ENCODE measurements at regions of chr19 and their contacts with region 1.

Region 1: GRCh38 chr19:40662921-40663694 is 27.3 kb downstream of the NUMBL start:
- DNase-seq: peak; percentile 85 to 98 (median 94)
- ATAC-seq: peak; percentile 89
- H3K4me3 ChIP-seq: peak overlapping the region; percentile 56
- H3K4me3 Mint-ChIP-seq: peak overlapping the region; percentile 91
- H3K27ac ChIP-seq: peak overlapping the region; percentile 35 to 53
- H3K27ac Mint-ChIP-seq: peak overlapping the region; percentile 74
- H3K4me1 ChIP-seq: peaks cover 15% of the 10 kb centered on the region
- H3K4me1 Mint-ChIP-seq: peaks cover 19% of the 10 kb centered on the region
- H3K27me3 ChIP-seq: no peaks in the 10 kb centered on the region
- H3K27me3 Mint-ChIP-seq: no peaks in the 10 kb centered on the region
- CTCF ChIP-seq: peak; percentile 90

Region 2: GRCh38 chr19:40716655-40717324 is 53.7 kb after region 1 on chr19 and contains the starts of genes COQ8B and ITPKC:
- CTCF ChIA-PET with region 1: interaction called, 3 read pairs
- POLR2A ChIA-PET with region 1: interaction called, 9 read pairs
- intact Hi-C with region 1: loop called in 1 of 2 experiments (anchors 10 kb)
- DNase-seq: peak; percentile 98 to 100 (median 99)
- ATAC-seq: peak; percentile 73
- H3K4me3 ChIP-seq: peak within 1 kb of the TSS; percentile 89
- H3K4me3 Mint-ChIP-seq: peak within 1 kb of the TSS; percentile 95
- H3K27ac ChIP-seq: peak within 1 kb of the TSS; percentile 89 to 96
- H3K27ac Mint-ChIP-seq: peak within 1 kb of the TSS; percentile 94
- H3K4me1 ChIP-seq: peaks cover 70% of the 10 kb centered on the region
- H3K4me1 Mint-ChIP-seq: peaks cover 70% of the 10 kb centered on the region
- H3K27me3 ChIP-seq: no peaks in the 10 kb centered on the region
- H3K27me3 Mint-ChIP-seq: no peaks in the 10 kb centered on the region
- CTCF ChIP-seq: no peak
- total RNA-seq, gene COQ8B: 16.4 to 18.3 TPM
- total RNA-seq, gene ITPKC: 3.7 to 4.5 TPM

Region 3: GRCh38 chr19:40798223-40798996 is 135.3 kb after region 1 on chr19:
- CTCF ChIA-PET with region 1: interaction called, 7 read pairs
- POLR2A ChIA-PET with region 1: interaction called, 12 read pairs
- intact Hi-C with region 1: loop called in 1 of 2 experiments (anchors 5 kb)
- DNase-seq: peak; percentile 100
- ATAC-seq: peak; percentile 78
- H3K4me3 ChIP-seq: peak overlapping the region; percentile 64
- H3K4me3 Mint-ChIP-seq: peak overlapping the region; percentile 92
- H3K27ac ChIP-seq: peak overlapping the region; percentile 88 to 96
- H3K27ac Mint-ChIP-seq: peak overlapping the region; percentile 98
- H3K4me1 ChIP-seq: peaks cover 47% of the 10 kb centered on the region
- H3K4me1 Mint-ChIP-seq: peaks cover 45% of the 10 kb centered on the region
- H3K27me3 ChIP-seq: no peaks in the 10 kb centered on the region
- H3K27me3 Mint-ChIP-seq: no peaks in the 10 kb centered on the region
- CTCF ChIP-seq: peak; percentile 40

Region 4: GRCh38 chr19:40822161-40822560 is 159.1 kb after region 1 on chr19:
- CTCF ChIA-PET with region 1: interaction called, 24 read pairs
- POLR2A ChIA-PET with region 1: interaction called, 13 read pairs
- intact Hi-C with region 1: loop called (anchors 1 to 2 kb)
- DNase-seq: peak in 1 of 14 experiments; percentile 17
- ATAC-seq: no peak
- H3K4me3 ChIP-seq: no peak overlapping the region
- H3K4me3 Mint-ChIP-seq: no peak overlapping the region
- H3K27ac ChIP-seq: no peak overlapping the region
- H3K27ac Mint-ChIP-seq: no peak overlapping the region
- H3K4me1 ChIP-seq: peaks cover 47% of the 10 kb centered on the region
- H3K4me1 Mint-ChIP-seq: peaks cover 38% of the 10 kb centered on the region
- H3K27me3 ChIP-seq: no peaks in the 10 kb centered on the region
- H3K27me3 Mint-ChIP-seq: no peaks in the 10 kb centered on the region
- CTCF ChIP-seq: no peak

Region 5: DNA sequence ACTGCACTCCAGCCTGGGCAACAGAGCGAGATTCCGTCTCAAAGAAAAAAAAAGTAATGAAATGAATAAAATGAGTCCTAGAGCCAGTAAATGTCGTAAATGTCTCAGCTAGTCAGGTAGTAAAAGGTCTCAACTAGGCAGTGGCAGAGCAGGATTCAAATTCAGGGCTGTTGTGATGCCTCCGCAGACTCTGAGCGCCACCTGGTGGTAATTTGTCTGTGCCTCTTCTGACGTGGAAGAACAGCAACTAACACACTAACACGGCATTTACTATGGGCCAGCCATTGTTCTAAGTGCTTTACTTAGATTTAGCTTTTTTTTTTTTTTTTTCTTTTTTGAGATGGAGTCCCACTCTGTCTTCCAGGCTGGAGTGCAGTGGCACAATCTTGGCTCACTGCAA is 481.3 kb after region 1 on chr19:
- CTCF ChIA-PET with region 1: interaction called, 13 read pairs
- POLR2A ChIA-PET with region 1: interaction called, 7 read pairs
- intact Hi-C with region 1: loop called (anchors 1 kb)
- DNase-seq: peak; percentile 80 to 95 (median 86)
- ATAC-seq: peak; percentile 97
- H3K4me3 ChIP-seq: no peak overlapping the region
- H3K4me3 Mint-ChIP-seq: no peak overlapping the region
- H3K27ac ChIP-seq: no peak overlapping the region
- H3K27ac Mint-ChIP-seq: no peak overlapping the region
- H3K4me1 ChIP-seq: no peaks in the 10 kb centered on the region
- H3K4me1 Mint-ChIP-seq: peaks cover 4% of the 10 kb centered on the region
- H3K27me3 ChIP-seq: no peaks in the 10 kb centered on the region
- H3K27me3 Mint-ChIP-seq: peaks cover 24% of the 10 kb centered on the region
- CTCF ChIP-seq: peak; percentile 84

Region 6: DNA sequence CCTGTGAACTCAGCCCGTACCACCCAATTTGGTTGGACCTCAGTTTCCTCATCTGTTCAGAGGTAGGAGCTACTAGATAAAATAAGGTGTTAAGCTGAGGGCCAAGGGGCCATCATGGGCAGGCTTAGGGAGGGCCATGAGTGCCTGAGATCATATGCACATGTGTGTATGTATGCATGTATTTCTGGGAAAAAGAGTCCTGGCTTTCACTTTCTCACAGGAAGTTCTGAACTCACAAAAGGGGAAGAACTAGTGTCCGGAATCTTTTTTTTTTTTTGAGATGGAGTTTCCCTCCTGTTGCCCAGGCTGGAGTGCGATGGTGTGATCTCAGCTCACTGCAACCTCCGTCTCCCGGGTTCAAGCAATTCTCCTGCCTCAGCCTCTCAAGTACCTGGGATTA is 671.7 kb after region 1 on chr19:
- CTCF ChIA-PET with region 1: no interaction called
- POLR2A ChIA-PET with region 1: no interaction called
- intact Hi-C with region 1: no loop called
- DNase-seq: peak in 2 of 14 experiments; percentile 41 to 55
- ATAC-seq: no peak
- H3K4me3 ChIP-seq: no peak overlapping the region
- H3K4me3 Mint-ChIP-seq: no peak overlapping the region
- H3K27ac ChIP-seq: no peak overlapping the region
- H3K27ac Mint-ChIP-seq: peak overlapping the region; percentile 66
- H3K4me1 ChIP-seq: peaks cover 63% of the 10 kb centered on the region
- H3K4me1 Mint-ChIP-seq: peaks cover 42% of the 10 kb centered on the region
- H3K27me3 ChIP-seq: no peaks in the 10 kb centered on the region
- H3K27me3 Mint-ChIP-seq: no peaks in the 10 kb centered on the region
- CTCF ChIP-seq: no peak

Measured in CD4-positive, alpha-beta T cell (primary cell).